Activated naive CD4-positive, alpha-beta T cell treated with anti-CD3 and anti-CD28 coated beads for 36 hours (primary cell): ENCODE measurements at regions of chr11 and their contacts with region 1.

Region 1: GRCh38 chr11:7442588-7443215 is 42.6 kb upstream of the OLFML1 start:
- DNase-seq: peak; percentile 87
- H3K4me3 Mint-ChIP-seq: no peak overlapping the region
- H3K27ac Mint-ChIP-seq: no peak overlapping the region
- H3K4me1 Mint-ChIP-seq: no peaks in the 10 kb centered on the region
- H3K27me3 Mint-ChIP-seq: no peaks in the 10 kb centered on the region

Region 2: DNA sequence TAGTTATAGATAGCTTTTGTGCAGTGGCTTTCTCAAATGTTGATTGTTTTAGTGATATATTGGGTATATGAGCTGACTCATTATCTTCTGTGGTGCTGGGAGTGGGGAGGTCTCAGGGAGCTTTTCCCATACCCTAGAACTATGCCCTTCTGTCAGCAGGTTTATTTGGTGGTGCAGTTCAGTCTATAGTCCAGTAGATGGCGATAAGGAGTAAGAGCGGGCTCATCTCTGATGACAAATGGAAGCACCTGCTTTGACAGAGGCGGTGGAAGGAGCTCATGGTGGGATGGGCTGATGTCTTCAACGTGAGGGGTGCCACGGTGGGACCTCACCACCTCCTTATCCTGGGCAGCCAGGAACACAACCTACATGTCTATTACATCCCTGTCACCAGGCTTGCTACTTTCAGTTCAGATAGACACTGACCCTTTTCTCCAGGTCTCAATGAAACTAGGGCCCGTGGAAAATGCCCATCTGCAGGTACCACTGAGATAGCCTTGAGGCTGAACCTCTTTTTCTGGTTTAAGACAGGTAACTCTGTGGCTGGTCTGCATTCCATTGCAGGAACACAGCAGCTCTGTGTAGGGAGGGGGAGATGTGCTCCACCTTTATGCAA is 630.2 kb before region 1 on chr11:
- CTCF ChIA-PET with region 1: interaction called, 3 read pairs
- intact Hi-C with region 1: loop called (anchors 2 kb)
- DNase-seq: peak; percentile 45
- H3K4me3 Mint-ChIP-seq: no peak overlapping the region
- H3K27ac Mint-ChIP-seq: no peak overlapping the region
- H3K4me1 Mint-ChIP-seq: no peaks in the 10 kb centered on the region
- H3K27me3 Mint-ChIP-seq: peaks cover 15% of the 10 kb centered on the region

Region 3: GRCh38 chr11:7098235-7098832 is 344.4 kb before region 1 on chr11:
- CTCF ChIA-PET with region 1: interaction called, 15 read pairs
- intact Hi-C with region 1: loop called (anchors 1 kb)
- DNase-seq: no peak
- H3K4me3 Mint-ChIP-seq: no peak overlapping the region
- H3K27ac Mint-ChIP-seq: no peak overlapping the region
- H3K4me1 Mint-ChIP-seq: no peaks in the 10 kb centered on the region
- H3K27me3 Mint-ChIP-seq: peaks cover 11% of the 10 kb centered on the region

Region 4: GRCh38 chr11:7143908-7144307 is 298.8 kb before region 1 on chr11:
- CTCF ChIA-PET with region 1: no interaction called
- intact Hi-C with region 1: loop called (anchors 2 kb)
- DNase-seq: no peak
- H3K4me3 Mint-ChIP-seq: no peak overlapping the region
- H3K27ac Mint-ChIP-seq: no peak overlapping the region
- H3K4me1 Mint-ChIP-seq: no peaks in the 10 kb centered on the region
- H3K27me3 Mint-ChIP-seq: peaks cover 5% of the 10 kb centered on the region

Region 5: DNA sequence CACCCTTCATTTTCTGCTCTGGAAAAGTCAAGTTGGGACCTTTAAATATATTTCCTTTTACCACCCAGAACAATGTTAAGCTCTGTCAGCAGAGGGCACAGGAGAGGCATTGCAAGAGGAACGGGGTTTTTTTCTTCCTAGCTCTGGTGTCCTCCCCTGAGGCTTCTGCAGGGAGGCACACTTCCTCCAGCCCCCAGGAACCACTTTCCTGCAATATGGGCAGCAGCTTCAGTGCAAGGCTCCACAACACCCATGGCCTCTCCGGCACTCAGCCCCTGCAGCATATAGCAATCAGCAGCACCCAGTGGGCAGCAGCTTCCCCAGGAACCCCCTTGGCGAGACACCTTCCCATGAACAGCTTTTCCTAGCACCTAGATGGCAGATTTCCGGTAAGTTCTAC is 89.6 kb before region 1 on chr11:
- CTCF ChIA-PET with region 1: interaction called, 37 read pairs
- intact Hi-C with region 1: loop called (anchors 1 kb)
- DNase-seq: peak; percentile 42
- H3K4me3 Mint-ChIP-seq: no peak overlapping the region
- H3K27ac Mint-ChIP-seq: no peak overlapping the region
- H3K4me1 Mint-ChIP-seq: no peaks in the 10 kb centered on the region
- H3K27me3 Mint-ChIP-seq: peaks cover 11% of the 10 kb centered on the region

Region 6: GRCh38 chr11:7665473-7666291 is 223.0 kb after region 1 on chr11:
- CTCF ChIA-PET with region 1: interaction called, 4 read pairs
- intact Hi-C with region 1: loop called (anchors 1 kb)
- DNase-seq: peak; percentile 85
- H3K4me3 Mint-ChIP-seq: no peak overlapping the region
- H3K27ac Mint-ChIP-seq: no peak overlapping the region
- H3K4me1 Mint-ChIP-seq: peaks cover 7% of the 10 kb centered on the region
- H3K27me3 Mint-ChIP-seq: no peaks in the 10 kb centered on the region

Region 7: DNA sequence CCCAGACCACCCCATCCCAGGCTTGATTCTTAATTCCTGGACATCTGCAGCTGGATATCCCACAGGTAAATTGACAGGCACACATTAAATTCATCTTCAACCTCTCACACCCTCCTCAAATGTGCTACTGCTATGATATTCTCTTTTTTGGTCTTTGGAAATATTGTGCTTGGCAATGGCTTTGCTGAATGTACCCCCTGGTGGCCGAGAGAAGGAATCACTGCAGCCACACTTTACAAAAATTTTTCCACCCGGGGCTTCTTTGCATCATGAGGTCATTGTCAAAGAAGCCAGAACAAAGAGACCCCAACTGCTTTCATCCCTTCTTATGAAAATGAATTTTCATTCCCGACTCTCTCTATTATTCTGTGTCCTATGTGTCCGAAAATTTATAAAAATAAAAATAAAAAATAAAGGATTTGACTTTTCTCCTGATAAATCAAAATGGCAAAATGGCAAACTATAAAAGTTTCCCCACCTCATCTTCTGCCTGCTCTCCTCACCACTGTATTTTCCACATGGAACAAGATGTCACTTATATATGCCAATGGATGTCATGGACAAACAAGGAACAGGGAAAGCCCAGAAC is 245.6 kb after region 1 on chr11:
- CTCF ChIA-PET with region 1: interaction called, 3 read pairs
- intact Hi-C with region 1: loop called (anchors 5 kb)
- DNase-seq: peak; percentile 35
- H3K4me3 Mint-ChIP-seq: no peak overlapping the region
- H3K27ac Mint-ChIP-seq: no peak overlapping the region
- H3K4me1 Mint-ChIP-seq: peaks cover 6% of the 10 kb centered on the region
- H3K27me3 Mint-ChIP-seq: peaks cover 26% of the 10 kb centered on the region